ENCODE measurements at regions of chr17 and their contacts with region 1.

Region 1: GRCh38 chr17:50883850-50884438 is 17.8 kb upstream of the TOB1 start:
- DNase-seq: no peak
- ATAC-seq: peak; percentile 47
- H3K4me3 ChIP-seq: peak overlapping the region; percentile 2 to 54 (median 41); a peak in 4 of 6 replicates
- H3K27ac ChIP-seq: peak overlapping the region; percentile 67
- H3K4me1 ChIP-seq: peaks cover 62% of the 10 kb centered on the region
- H3K27me3 ChIP-seq: no peaks in the 10 kb centered on the region
- CTCF ChIP-seq: no peak
- EP300 ChIP-seq: no peak; a peak in 1 of 4 replicates
- POLR2A ChIP-seq: no peak
- RAD21 ChIP-seq: no peak

Region 2: GRCh38 chr17:50861071-50861676 is 22.8 kb before region 1 on chr17:
- CTCF ChIA-PET with region 1: no interaction called
- POLR2A ChIA-PET with region 1: interaction called, 343 read pairs
- in situ Hi-C with region 1: no loop called
- intact Hi-C with region 1: loop called (anchors 2 kb)
- DNase-seq: no peak
- ATAC-seq: no peak
- H3K4me3 ChIP-seq: no peak overlapping the region
- H3K27ac ChIP-seq: no peak overlapping the region
- H3K4me1 ChIP-seq: peaks cover 57% of the 10 kb centered on the region
- H3K27me3 ChIP-seq: no peaks in the 10 kb centered on the region; a peak in 1 of 5 replicates
- CTCF ChIP-seq: no peak
- EP300 ChIP-seq: no peak
- POLR2A ChIP-seq: peak in 1 of 2 experiments; percentile 62; a peak in 1 of 4 replicates
- RAD21 ChIP-seq: no peak

Region 3: DNA sequence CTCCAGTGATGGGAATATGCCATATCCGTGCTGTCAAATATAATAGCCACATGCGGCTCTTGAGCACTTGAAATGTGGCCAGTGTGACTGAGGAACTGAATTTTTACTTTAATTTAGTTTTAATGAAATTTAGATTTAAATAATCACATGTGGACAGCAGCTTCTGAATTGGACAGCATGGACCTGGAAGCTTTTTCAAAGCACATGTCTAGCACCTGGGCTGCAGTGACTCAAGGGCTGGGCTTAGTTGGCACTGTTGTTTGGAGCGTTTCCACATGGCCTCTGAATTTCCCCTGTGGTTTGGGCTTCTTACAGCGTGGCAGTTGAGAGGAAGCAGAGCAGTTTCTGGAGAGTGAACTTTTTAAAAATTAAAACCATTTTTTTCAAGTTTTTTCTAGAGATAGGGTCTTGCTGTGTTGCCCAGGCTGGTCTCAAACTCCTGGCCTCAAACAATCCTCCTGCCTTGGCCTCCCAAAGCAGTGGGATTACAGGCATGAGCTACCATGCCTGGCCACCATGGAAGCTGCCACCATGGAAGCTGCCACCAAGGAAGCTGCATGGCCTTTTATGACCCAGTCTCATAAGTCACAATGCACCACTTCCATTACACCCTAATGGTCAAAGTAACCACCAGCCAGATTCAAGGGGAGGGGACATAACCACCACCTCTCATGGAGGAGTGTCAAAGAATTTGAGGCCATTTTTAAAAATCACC is 11.1 kb before region 1 on chr17:
- CTCF ChIA-PET with region 1: no interaction called
- POLR2A ChIA-PET with region 1: interaction called, 343 read pairs
- in situ Hi-C with region 1: no loop called
- intact Hi-C with region 1: no loop called
- DNase-seq: no peak
- ATAC-seq: no peak
- H3K4me3 ChIP-seq: no peak overlapping the region
- H3K27ac ChIP-seq: no peak overlapping the region
- H3K4me1 ChIP-seq: peaks cover 29% of the 10 kb centered on the region
- H3K27me3 ChIP-seq: no peaks in the 10 kb centered on the region
- CTCF ChIP-seq: no peak
- EP300 ChIP-seq: no peak
- POLR2A ChIP-seq: no peak
- RAD21 ChIP-seq: no peak

Region 4: DNA sequence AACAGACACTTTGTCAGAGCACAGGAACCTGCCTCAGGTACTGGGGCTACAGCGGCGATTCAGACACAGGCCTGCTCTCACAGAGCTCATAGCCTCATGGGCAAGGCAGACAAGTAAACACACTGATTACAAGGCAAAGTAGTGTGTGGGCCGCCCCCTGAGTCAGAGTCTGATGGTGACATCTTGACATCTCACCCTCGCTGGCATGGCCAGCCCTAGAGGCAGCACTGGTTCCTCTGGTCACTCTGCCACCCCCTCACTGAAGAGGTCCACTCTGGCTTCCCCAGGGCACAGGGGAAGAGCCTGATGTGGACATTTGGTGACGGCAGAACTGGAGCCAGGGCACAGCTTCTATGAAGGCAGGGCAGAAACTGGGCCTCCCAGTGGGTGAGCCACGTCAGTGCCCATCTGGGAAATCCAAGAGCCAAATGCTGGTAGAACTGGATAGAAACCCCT is 15.1 kb after region 1 on chr17:
- CTCF ChIA-PET with region 1: no interaction called
- POLR2A ChIA-PET with region 1: interaction called, 185 read pairs
- in situ Hi-C with region 1: no loop called
- intact Hi-C with region 1: no loop called
- DNase-seq: peak; percentile 88
- ATAC-seq: peak; percentile 93
- H3K4me3 ChIP-seq: peak overlapping the region in 1 of 3 experiments; percentile 35; a peak in 3 of 6 replicates
- H3K27ac ChIP-seq: peak overlapping the region; percentile 44
- H3K4me1 ChIP-seq: peaks cover 77% of the 10 kb centered on the region
- H3K27me3 ChIP-seq: no peaks in the 10 kb centered on the region
- CTCF ChIP-seq: peak; percentile 33; the same call in 1 of the 2 replicates
- EP300 ChIP-seq: 0 out of 4 replicates have a peak, but pooled peaks of 1 of the 2 experiments have one; percentile 51
- POLR2A ChIP-seq: no peak
- RAD21 ChIP-seq: no peak

Region 5: DNA sequence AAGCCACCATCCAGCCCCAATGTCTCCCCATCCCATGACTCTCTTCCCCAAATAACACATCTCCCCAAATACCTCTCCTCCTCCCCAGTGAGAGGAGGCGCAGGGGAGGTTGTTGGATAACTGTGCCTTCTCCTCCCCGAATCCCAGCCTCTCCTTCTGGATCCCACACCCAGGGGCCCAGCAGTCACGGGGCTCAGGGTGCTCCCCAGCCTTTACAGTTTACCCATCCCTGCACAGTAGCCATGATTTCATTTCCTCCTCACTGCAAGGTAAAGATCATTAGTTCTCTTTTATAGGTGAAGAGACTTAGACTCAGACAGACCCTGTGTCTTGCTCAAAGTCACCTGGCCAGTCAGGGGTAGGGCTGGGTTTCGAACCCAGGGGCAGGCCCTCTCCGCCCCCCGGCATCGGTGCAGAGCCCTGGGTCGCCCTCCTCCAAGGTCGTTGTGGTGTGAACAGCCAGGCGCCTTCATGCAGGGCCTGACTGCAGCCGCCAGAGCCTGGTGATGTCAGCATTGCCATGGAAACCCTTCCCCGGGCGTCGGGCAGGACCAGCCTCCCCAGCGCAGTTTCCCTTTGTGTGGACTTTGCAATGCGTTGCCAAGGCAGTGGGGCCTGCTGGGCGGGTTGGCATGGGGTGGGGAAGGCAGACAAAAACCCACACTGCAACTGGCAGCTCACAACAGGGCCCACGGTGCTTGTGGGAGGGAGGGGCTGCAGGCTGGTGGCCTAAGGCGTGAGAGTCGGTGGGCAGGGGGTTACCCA is 35.6 kb after region 1 on chr17:
- CTCF ChIA-PET with region 1: no interaction called
- POLR2A ChIA-PET with region 1: interaction called, 13 read pairs
- in situ Hi-C with region 1: no loop called
- intact Hi-C with region 1: no loop called
- DNase-seq: peak; percentile 86
- ATAC-seq: peak; percentile 74
- H3K4me3 ChIP-seq: peak overlapping the region in 2 of 3 experiments; percentile 31 to 65; a peak in 3 of 6 replicates
- H3K27ac ChIP-seq: peak overlapping the region; percentile 5
- H3K4me1 ChIP-seq: peaks cover 100% of the 10 kb centered on the region
- H3K27me3 ChIP-seq: 0 out of 5 replicates have a peak, but pooled peaks cover 0 to 2% of the 10 kb centered on the region in 2 experiments
- CTCF ChIP-seq: peak; percentile 19
- EP300 ChIP-seq: no peak
- POLR2A ChIP-seq: no peak
- RAD21 ChIP-seq: 0 out of 2 replicates have a peak, but pooled peaks have one; percentile 9

Region 6: GRCh38 chr17:50931144-50931908 is 47.4 kb after region 1 on chr17:
- CTCF ChIA-PET with region 1: no interaction called
- POLR2A ChIA-PET with region 1: interaction called, 11 read pairs
- in situ Hi-C with region 1: no loop called
- intact Hi-C with region 1: no loop called
- DNase-seq: peak; percentile 77
- ATAC-seq: peak; percentile 89
- H3K4me3 ChIP-seq: peak overlapping the region; percentile 60 to 85 (median 76)
- H3K27ac ChIP-seq: peak overlapping the region; percentile 77
- H3K4me1 ChIP-seq: peaks cover 74% of the 10 kb centered on the region
- H3K27me3 ChIP-seq: peaks cover 1 to 13% of the 10 kb centered on the region in 2 experiments; a peak in 2 of 5 replicates
- CTCF ChIP-seq: no peak
- EP300 ChIP-seq: no peak
- POLR2A ChIP-seq: 0 out of 4 replicates have a peak, but pooled peaks have one; percentile 35 to 55
- RAD21 ChIP-seq: no peak

Region 7: DNA sequence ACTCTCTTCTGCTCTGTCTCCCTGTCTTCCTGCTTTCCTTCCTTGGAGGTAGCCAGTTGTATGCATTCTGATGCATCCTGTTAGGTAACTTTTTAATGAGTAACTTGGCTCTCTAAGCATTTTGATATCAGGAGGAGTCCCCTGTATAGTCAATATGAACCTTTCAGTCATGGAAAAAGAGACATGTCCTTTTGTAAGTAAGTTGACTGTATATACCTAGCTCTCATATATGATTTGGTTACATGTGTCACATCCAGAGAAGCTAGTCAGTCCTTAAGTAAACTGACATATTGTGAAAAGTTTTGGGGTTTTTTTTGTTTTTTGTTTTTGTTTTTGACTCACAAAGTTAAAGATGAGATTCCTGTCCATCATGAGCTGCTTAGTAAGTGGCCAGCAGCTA is 395.2 kb after region 1 on chr17:
- CTCF ChIA-PET with region 1: no interaction called
- POLR2A ChIA-PET with region 1: no interaction called
- in situ Hi-C with region 1: no loop called
- intact Hi-C with region 1: no loop called
- DNase-seq: no peak
- ATAC-seq: no peak
- H3K4me3 ChIP-seq: no peak overlapping the region
- H3K27ac ChIP-seq: no peak overlapping the region
- H3K4me1 ChIP-seq: no peaks in the 10 kb centered on the region
- H3K27me3 ChIP-seq: no peaks in the 10 kb centered on the region
- CTCF ChIP-seq: no peak
- EP300 ChIP-seq: no peak
- POLR2A ChIP-seq: no peak
- RAD21 ChIP-seq: no peak

Measured in HepG2 (cell line).